Aorta (tissue), 5 donors: ENCODE measurements at regions of chr11 and their contacts with region 1.

Region 1: GRCh38 chr11:134024420-134025081 is 44.3 kb upstream of the JAM3 start:
- DNase-seq: peak in 1 of 2 donors; percentile 59
- ATAC-seq: no peak
- H3K4me3 ChIP-seq: no peak overlapping the region
- H3K27ac ChIP-seq: no peak overlapping the region
- H3K4me1 ChIP-seq: no peaks in the 10 kb centered on the region
- H3K27me3 ChIP-seq: no peaks in the 10 kb centered on the region

Region 2: GRCh38 chr11:133966921-133967598 is 57.5 kb before region 1 on chr11:
- intact Hi-C with region 1: loop called in 1 of 2 experiments (anchors 5 kb)
- DNase-seq: peak in 1 of 2 donors; percentile 88
- ATAC-seq: no peak
- H3K4me3 ChIP-seq: no peak overlapping the region
- H3K27ac ChIP-seq: no peak overlapping the region
- H3K4me1 ChIP-seq: no peaks in the 10 kb centered on the region
- H3K27me3 ChIP-seq: no peaks in the 10 kb centered on the region